Panc1 (cell line): ENCODE measurements at regions of chr6 and their contacts with region 1.

Region 1: DNA sequence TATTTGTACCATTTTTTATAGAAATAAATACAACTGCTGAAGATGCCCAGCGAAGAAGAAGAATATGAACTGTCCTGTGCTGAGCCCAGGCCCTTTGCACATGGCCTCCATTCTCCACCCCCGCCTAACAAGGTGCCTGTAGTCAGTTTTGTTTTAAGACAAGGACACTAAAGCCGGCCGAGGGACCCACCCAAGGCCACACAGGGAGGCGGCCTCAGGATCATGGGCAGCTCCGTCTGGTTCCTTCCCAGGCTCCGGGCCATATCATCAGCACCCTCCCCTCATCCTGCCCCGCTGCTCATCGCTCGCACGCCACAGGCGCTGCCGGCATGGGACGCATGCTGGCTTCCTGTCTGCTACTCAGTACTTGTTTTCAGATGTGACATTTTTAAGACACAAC is 21.3 kb downstream of the PSMG4 start:
- DNase-seq: no peak
- ATAC-seq: no peak
- H3K4me3 ChIP-seq: no peak overlapping the region
- H3K27ac ChIP-seq: no peak overlapping the region
- H3K4me1 ChIP-seq: no peaks in the 10 kb centered on the region
- H3K27me3 ChIP-seq: no peaks in the 10 kb centered on the region
- CTCF ChIP-seq: no peak

Region 2: GRCh38 chr6:2047855-2048254 is 1232.2 kb before region 1 on chr6:
- CTCF ChIA-PET with region 1: no interaction called
- POLR2A ChIA-PET with region 1: no interaction called
- in situ Hi-C with region 1: no loop called
- intact Hi-C with region 1: no loop called
- DNase-seq: peak; percentile 15
- ATAC-seq: no peak
- H3K4me3 ChIP-seq: no peak overlapping the region
- H3K27ac ChIP-seq: no peak overlapping the region
- H3K4me1 ChIP-seq: no peaks in the 10 kb centered on the region
- H3K27me3 ChIP-seq: no peaks in the 10 kb centered on the region
- CTCF ChIP-seq: no peak

Region 3: GRCh38 chr6:3294921-3295871 is 15.1 kb after region 1 on chr6:
- CTCF ChIA-PET with region 1: interaction called, 10 read pairs
- POLR2A ChIA-PET with region 1: no interaction called
- in situ Hi-C with region 1: no loop called
- intact Hi-C with region 1: no loop called
- DNase-seq: no peak
- ATAC-seq: peak; percentile 60; the same call in 1 of the 2 replicates
- H3K4me3 ChIP-seq: no peak overlapping the region
- H3K27ac ChIP-seq: no peak overlapping the region
- H3K4me1 ChIP-seq: peaks cover 15% of the 10 kb centered on the region
- H3K27me3 ChIP-seq: no peaks in the 10 kb centered on the region
- CTCF ChIP-seq: no peak

Region 4: GRCh38 chr6:3732345-3733141 is 452.5 kb after region 1 on chr6:
- CTCF ChIA-PET with region 1: interaction called, 5 read pairs
- POLR2A ChIA-PET with region 1: no interaction called
- in situ Hi-C with region 1: no loop called
- intact Hi-C with region 1: loop called (anchors 1 kb)
- DNase-seq: no peak
- ATAC-seq: peak; percentile 90
- H3K4me3 ChIP-seq: no peak overlapping the region
- H3K27ac ChIP-seq: no peak overlapping the region
- H3K4me1 ChIP-seq: no peaks in the 10 kb centered on the region
- H3K27me3 ChIP-seq: no peaks in the 10 kb centered on the region
- CTCF ChIP-seq: peak; percentile 96

Region 5: GRCh38 chr6:3962957-3963303 is 682.8 kb after region 1 on chr6:
- CTCF ChIA-PET with region 1: interaction called, 10 read pairs
- POLR2A ChIA-PET with region 1: no interaction called
- in situ Hi-C with region 1: no loop called
- intact Hi-C with region 1: no loop called
- DNase-seq: no peak
- ATAC-seq: no peak
- H3K4me3 ChIP-seq: no peak overlapping the region
- H3K27ac ChIP-seq: no peak overlapping the region
- H3K4me1 ChIP-seq: no peaks in the 10 kb centered on the region
- H3K27me3 ChIP-seq: no peaks in the 10 kb centered on the region
- CTCF ChIP-seq: no peak